ENCODE measurements at regions of chr15 and their contacts with region 1.

Region 1: GRCh38 chr15:91055548-91056331 is 33.3 kb upstream of the VPS33B start:
- DNase-seq: peak; percentile 66
- H3K4me3 ChIP-seq: no peak overlapping the region
- H3K27ac ChIP-seq: no peak overlapping the region
- H3K4me1 ChIP-seq: no peaks in the 10 kb centered on the region
- H3K27me3 ChIP-seq: peaks cover 6% of the 10 kb centered on the region
- CTCF ChIP-seq: peak; percentile 46

Region 2: DNA sequence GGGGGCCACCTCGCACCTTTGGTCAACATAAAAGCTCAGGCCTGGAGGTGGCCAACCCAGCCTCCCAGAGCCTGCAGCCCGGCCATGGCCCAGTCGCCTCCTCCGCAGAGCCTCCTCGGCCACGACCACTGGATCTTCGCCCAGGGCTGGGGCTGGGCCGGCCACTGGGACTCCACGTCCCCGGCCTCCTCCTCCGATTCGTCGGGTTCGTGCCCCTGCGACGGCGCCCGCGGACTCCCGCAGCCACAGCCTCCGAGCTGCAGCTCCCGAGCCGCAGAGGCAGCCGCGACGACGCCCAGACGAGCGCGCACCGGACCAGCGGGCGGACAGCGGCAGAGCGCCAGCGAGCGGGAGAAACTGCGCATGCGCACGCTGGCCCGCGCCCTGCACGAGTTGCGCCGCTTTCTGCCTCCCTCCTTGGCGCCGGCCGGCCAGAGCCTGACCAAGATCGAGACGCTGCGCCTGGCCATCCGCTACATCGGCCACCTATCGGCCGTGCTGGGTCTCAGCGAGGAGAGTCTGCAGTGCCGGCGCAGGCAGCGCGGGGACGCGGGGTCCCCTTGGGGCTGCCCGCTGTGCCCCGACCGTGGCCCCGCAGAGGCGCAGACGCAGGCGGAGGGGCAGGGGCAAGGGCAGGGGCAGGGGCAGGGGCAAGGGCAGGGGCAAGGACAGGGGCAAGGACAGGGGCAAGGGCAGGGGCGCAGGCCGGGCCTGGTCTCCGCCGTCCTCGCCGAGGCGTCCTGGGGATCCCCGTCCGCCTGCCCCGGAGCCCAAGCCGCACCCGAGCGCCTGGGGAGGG is 1279.3 kb before region 1 on chr15 and contains the start of gene MESP2:
- intact Hi-C with region 1: no loop called
- DNase-seq: peak; percentile 85
- H3K4me3 ChIP-seq: peak within 1 kb of the TSS; percentile 30
- H3K27ac ChIP-seq: no peak within 1 kb of the TSS
- H3K4me1 ChIP-seq: peaks cover 17% of the 10 kb centered on the region
- H3K27me3 ChIP-seq: no peaks in the 10 kb centered on the region
- CTCF ChIP-seq: no peak
- total RNA-seq, gene MESP2: 0.45 to 5.4 TPM

Region 3: GRCh38 chr15:91022075-91022835 is 33.5 kb before region 1 on chr15 and contains the start of gene VPS33B:
- intact Hi-C with region 1: no loop called
- DNase-seq: peak; percentile 95
- H3K4me3 ChIP-seq: peak within 1 kb of the TSS; percentile 91
- H3K27ac ChIP-seq: peak within 1 kb of the TSS; percentile 41
- H3K4me1 ChIP-seq: peaks cover 4% of the 10 kb centered on the region
- H3K27me3 ChIP-seq: no peaks in the 10 kb centered on the region
- CTCF ChIP-seq: no peak
- total RNA-seq, gene VPS33B: 18.0 to 18.1 TPM

Region 4: DNA sequence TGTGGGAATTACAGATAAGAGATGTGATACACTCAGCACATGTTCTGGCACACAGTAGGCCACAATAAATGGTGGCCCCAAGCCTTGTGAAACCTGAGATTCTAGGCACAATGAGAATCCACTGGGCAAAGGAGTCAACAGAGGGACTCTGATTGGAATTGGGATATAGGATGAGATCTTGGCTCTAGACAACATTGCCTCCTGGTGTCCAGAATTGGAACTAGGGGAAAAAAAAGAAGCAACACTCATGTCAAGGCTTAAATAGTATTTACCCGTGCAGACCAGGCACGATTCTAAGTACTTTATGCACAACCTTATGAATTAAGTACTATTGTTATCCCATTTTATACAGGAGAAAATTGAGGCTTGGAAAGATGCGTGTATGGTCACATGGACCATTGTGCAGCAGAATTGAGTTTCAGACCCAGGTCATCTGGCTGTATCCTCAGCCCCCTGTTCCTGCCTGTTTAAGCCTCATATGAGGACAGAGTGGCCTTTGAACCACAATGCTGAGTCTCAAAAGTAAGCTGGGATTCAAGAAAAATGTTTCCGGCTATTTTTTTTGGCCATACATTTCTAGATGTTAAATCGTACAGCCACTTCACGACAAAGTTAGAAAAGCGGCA is 169.1 kb after region 1 on chr15:
- intact Hi-C with region 1: loop called (anchors 2 kb)
- DNase-seq: peak; percentile 21
- H3K4me3 ChIP-seq: no peak overlapping the region
- H3K27ac ChIP-seq: no peak overlapping the region
- H3K4me1 ChIP-seq: no peaks in the 10 kb centered on the region
- H3K27me3 ChIP-seq: no peaks in the 10 kb centered on the region
- CTCF ChIP-seq: peak; percentile 47

Region 5: DNA sequence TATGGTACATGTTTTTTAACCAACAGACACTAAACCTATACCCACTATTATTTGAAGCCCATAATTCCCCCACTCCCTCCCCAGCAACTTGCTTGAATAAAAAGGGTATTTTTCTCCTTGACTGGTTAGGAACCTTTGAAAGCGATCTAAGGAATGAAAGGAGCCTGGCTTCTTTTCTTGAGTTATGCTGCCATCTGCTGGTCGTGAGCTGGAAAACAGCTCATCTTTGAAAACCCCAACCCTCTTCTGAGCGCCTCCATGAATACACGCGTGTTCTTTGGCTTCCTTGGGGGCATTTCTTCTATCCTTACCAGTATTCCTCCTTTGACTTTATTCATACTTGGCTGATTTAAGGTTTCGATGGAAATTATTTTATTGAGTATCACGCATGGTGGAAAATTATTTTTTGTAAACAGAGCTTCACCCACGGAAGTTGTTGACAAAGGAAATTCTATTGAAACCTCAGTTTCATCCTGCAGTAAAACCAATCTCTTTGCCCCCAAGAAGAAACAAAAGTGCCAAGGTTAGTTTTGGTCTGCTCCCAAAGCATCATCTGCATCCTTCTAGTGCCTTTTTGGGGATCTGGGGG is 215.9 kb after region 1 on chr15:
- intact Hi-C with region 1: loop called (anchors 2 kb)
- DNase-seq: peak; percentile 58
- H3K4me3 ChIP-seq: no peak overlapping the region
- H3K27ac ChIP-seq: no peak overlapping the region
- H3K4me1 ChIP-seq: no peaks in the 10 kb centered on the region
- H3K27me3 ChIP-seq: no peaks in the 10 kb centered on the region
- CTCF ChIP-seq: peak; percentile 61